Calu3 (cell line): ENCODE measurements at regions of chr2 and their contacts with region 1.

Region 1: DNA sequence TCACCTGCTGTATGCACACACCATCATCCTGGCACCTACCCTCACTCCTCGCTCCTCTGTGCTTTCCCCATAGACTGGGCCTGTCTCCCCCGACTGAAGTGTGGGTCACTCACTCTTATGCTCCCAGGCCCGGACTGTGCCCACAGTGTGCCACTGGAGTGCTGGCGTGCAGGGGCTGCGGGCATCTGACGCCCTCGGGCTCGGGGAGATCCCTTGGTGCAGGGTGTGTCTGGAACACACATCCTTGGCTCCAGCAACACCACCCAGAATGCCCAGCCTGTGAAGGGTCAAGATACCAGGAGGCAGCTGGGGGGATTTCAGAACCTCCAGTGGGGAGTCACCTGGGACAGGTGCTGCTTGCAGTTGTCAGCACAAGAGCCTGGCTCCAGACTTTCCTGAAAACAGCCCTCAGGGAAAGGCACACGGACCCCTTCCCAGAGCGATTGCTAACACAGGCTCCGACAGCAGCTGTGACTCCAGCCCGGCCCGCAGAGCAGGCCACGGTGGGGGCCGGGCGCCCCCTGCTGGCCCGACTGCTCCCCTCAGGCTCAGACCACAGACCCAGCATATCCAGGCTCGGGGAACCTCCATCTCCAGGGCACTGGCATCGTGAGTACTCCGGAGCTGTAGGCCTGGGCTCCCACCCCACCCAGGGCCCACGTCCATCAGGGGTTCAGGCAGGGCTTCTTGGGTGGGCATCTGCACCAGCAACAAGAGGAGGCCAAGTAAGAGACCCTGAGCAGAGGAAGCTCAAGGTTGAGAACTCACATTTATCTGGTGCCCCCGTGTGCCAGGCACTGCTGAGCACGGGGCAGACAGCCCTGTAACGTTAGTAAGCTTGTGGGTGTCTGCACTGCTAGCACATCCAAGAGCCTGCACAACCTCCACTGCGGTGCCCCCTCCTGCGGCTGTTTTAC is 8.6 kb downstream of the HS1BP3 start:
- DNase-seq: peak; percentile 89
- H3K4me3 Mint-ChIP-seq: no peak overlapping the region
- H3K27ac Mint-ChIP-seq: no peak overlapping the region
- H3K4me1 Mint-ChIP-seq: peaks cover 10% of the 10 kb centered on the region
- H3K27me3 Mint-ChIP-seq: no peaks in the 10 kb centered on the region
- CTCF ChIP-seq: peak; percentile 96

Region 2: DNA sequence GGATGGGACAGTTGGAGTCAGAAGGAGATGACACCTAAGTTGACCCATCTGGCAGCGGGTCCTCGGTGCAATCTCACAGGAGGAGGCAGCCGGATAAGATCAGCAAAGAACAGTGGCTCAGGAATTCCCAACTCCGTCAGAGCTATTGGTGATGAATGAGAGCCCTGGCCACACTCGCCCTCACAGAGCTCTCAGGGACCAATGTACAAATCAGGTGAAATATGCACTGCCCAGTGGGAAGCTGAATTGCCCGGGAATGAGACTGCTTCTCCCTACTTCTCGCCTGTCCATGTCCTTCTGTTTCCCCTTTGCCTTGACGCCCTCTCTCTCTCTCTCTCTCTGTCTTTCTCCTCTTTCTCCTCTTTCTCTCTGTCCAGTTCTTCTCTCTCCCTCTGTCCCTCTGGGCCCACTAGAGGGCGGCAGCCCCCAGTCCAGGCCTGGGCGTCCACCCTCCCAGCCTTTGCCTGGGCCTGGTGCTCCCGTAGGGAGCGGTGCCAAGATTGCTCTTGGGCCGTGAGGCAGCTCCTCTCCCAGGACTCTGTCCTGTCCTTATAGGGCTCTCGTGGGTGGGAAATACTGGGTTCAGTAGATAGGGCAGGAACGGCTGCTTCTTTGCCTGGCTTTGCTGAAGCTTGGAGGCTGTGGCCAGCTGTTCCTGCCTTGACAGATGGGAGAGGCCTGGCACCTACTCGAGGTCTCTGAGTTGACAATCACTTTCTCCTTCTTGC is 263.4 kb before region 1 on chr2:
- CTCF ChIA-PET with region 1: interaction called, 15 read pairs
- intact Hi-C with region 1: no loop called
- DNase-seq: peak; percentile 83
- H3K4me3 Mint-ChIP-seq: no peak overlapping the region
- H3K27ac Mint-ChIP-seq: no peak overlapping the region
- H3K4me1 Mint-ChIP-seq: no peaks in the 10 kb centered on the region
- H3K27me3 Mint-ChIP-seq: peaks cover 13% of the 10 kb centered on the region
- CTCF ChIP-seq: peak; percentile 67

Region 3: GRCh38 chr2:20396356-20397000 is 245.8 kb before region 1 on chr2:
- CTCF ChIA-PET with region 1: interaction called, 19 read pairs
- intact Hi-C with region 1: loop called (anchors 1 kb)
- DNase-seq: no peak
- H3K4me3 Mint-ChIP-seq: no peak overlapping the region
- H3K27ac Mint-ChIP-seq: no peak overlapping the region
- H3K4me1 Mint-ChIP-seq: peaks cover 10% of the 10 kb centered on the region
- H3K27me3 Mint-ChIP-seq: peaks cover 39% of the 10 kb centered on the region
- CTCF ChIP-seq: no peak

Region 4: DNA sequence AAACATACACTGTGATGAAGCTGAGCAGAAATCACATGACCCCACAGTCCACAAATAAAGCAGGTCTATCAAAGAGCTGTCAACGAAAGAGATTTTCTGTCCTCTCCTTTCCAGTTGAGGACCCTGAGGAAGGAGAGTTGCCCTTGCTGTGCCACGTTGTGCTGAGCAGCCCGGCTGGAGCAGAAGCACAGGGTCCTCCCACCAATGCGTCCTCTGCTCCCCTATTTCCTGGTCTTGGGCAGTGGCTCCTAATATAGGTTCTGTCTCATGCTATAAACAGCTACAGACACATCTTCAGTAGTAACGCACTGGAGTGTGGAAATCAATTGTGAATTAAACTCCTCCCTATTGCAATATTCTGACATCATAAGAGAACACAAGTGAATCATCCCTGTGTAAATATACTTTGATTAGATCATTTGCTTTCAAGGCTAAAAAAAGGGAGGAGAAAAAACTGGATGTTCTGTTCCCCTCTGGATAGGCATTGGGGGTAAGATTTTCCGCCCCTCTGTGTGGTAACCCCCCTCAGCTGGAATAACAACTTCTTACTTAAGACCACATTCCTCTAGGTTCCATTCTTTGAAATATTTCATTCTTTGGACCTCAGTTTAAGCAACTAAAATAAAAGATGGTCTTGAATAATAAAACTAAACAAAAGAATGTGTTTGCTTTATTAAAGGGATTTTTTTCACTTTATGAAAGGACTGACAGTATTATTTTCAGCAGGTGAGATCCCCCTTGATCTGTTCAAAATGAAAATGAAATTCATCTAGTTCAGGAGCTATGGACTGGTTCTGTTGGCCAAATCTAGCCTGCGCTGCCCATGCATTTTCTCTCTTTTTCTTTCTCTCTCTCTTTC is 203.8 kb before region 1 on chr2:
- CTCF ChIA-PET with region 1: interaction called, 12 read pairs
- intact Hi-C with region 1: no loop called
- DNase-seq: peak; percentile 49
- H3K4me3 Mint-ChIP-seq: peak overlapping the region; percentile 35
- H3K27ac Mint-ChIP-seq: peak overlapping the region; percentile 55
- H3K4me1 Mint-ChIP-seq: peaks cover 18% of the 10 kb centered on the region
- H3K27me3 Mint-ChIP-seq: no peaks in the 10 kb centered on the region
- CTCF ChIP-seq: no peak